PC-9 (cell line): ENCODE measurements at regions of chr9 and their contacts with region 1.

Region 1: DNA sequence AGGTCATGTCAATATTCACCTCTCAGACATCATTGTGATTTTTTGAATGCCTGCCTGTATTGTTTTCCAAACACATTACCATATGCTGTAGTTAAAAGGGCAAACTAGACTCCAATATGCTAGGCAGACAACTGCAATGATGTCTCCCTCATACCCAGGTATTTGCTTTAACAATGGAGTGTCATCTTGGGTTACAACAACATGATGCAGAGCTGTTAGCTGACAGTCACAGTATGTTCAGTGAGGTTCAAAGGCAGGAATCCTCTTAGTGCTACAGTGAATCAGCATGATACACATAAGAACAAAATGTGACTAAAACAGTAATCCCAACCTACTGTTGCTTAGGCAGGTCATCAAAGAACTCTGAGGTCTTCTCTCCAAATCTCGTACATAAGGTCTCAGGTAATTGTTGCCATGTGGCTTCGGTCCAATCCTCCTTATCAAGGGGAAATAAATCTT is 24.0 kb downstream of the OR1J1 start:
- DNase-seq: no peak
- H3K4me3 ChIP-seq: no peak overlapping the region
- H3K27ac ChIP-seq: no peak overlapping the region
- H3K4me1 ChIP-seq: no peaks in the 10 kb centered on the region
- H3K27me3 ChIP-seq: peaks cover 6% of the 10 kb centered on the region; the same call in 1 of the 2 replicates
- CTCF ChIP-seq: no peak

Region 2: DNA sequence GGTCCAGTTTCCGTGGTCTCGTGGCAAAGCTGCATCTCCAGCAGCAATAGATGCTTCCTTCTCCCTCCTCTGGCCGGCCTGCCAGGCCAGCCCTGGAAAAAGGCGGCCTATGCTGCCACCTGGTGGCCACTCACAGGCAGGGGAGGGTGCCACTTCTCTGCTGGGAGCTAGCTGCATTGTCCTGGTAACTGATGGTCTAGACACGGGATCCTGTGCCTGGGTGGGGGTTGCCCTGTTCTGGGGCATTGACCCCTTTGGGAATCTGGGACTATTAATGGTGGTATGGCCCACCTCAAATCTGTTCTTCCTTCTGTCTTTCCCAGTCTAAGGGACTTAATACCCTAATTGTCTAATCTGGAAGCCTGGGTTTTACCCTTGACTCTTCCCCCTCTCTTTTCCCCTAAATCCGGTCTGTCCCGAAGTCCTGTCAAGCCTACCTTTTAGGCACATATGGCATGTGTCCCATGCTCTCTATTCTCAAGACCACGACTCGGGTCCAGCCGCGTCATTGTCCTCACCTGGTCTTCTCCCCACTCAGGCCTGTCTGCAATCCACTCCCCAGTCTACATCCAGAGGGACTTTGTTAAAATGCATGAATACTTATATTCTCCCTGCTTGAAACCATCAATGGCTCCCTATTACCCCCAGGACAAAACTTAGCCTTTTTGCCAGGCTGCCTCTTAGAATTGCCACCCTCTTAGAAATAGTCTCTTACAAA is 102.9 kb before region 1 on chr9:
- CTCF ChIA-PET with region 1: interaction called, 5 read pairs
- POLR2A ChIA-PET with region 1: no interaction called
- intact Hi-C with region 1: loop called (anchors 1 kb)
- DNase-seq: peak in 1 of 2 experiments; percentile 82
- H3K4me3 ChIP-seq: no peak overlapping the region
- H3K27ac ChIP-seq: no peak overlapping the region
- H3K4me1 ChIP-seq: no peaks in the 10 kb centered on the region
- H3K27me3 ChIP-seq: peaks cover 21% of the 10 kb centered on the region
- CTCF ChIP-seq: peak; percentile 93